ENCODE measurements at regions of chr2 and their contacts with region 1.

Region 1: DNA sequence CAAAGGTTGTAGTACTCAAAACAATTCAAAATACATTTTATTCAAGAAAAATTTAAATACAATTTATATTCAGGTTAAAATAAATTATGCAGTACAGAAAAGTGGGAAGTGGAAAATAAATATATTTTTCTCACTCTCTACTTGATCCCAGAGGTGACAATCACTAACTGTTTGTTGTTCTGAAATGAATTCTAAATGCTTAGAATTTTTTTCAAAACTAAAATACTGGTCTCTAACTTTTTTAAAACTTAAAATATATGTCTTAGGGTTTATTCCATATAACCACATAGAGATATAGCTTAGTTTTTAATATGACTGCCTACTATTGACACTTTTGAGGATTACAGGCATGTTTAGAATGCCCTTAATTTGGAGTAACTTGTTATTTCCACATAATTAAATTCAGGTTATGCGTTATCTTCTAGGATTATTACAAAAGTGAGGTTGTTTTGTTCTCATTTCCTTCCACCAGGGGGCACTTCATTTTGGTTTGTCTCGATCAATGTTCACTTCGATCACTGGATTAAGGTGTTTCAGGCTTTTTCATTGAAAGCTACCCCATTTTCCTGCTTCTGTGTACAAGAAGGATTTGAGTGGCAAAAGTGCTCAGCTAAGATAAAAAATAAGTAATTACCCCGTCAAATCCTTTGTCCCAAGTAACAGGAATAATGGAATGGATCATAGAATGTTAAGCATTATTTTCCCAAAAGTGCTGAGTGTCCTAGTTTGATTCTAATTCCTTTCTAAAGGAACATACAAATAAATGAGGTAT is 27.1 kb upstream of the TFPI start:
- DNase-seq: no peak
- ATAC-seq: peak; percentile 74
- H3K4me3 ChIP-seq: no peak overlapping the region
- H3K27ac ChIP-seq: no peak overlapping the region
- H3K4me1 ChIP-seq: no peaks in the 10 kb centered on the region
- H3K27me3 ChIP-seq: no peaks in the 10 kb centered on the region
- CTCF ChIP-seq: peak; percentile 54 to 68 (median 61); a peak in 5 of 6 replicates
- EP300 ChIP-seq: no peak
- POLR2A ChIP-seq: no peak
- RAD21 ChIP-seq: peak; percentile 45

Region 2: GRCh38 chr2:187299122-187299906 is 282.0 kb before region 1 on chr2:
- CTCF ChIA-PET with region 1: interaction called, 3 read pairs
- POLR2A ChIA-PET with region 1: no interaction called
- RAD21 ChIA-PET with region 1: no interaction called
- SMC1A ChIA-PET with region 1: no interaction called
- in situ Hi-C with region 1: no loop called
- intact Hi-C with region 1: loop called (anchors 10 kb)
- DNase-seq: no peak
- ATAC-seq: peak; percentile 79
- H3K4me3 ChIP-seq: no peak overlapping the region
- H3K27ac ChIP-seq: no peak overlapping the region
- H3K4me1 ChIP-seq: no peaks in the 10 kb centered on the region
- H3K27me3 ChIP-seq: no peaks in the 10 kb centered on the region
- CTCF ChIP-seq: peak; percentile 32 to 49 (median 38); a peak in 4 of 6 replicates
- EP300 ChIP-seq: no peak
- POLR2A ChIP-seq: no peak
- RAD21 ChIP-seq: peak; percentile 69

Region 3: DNA sequence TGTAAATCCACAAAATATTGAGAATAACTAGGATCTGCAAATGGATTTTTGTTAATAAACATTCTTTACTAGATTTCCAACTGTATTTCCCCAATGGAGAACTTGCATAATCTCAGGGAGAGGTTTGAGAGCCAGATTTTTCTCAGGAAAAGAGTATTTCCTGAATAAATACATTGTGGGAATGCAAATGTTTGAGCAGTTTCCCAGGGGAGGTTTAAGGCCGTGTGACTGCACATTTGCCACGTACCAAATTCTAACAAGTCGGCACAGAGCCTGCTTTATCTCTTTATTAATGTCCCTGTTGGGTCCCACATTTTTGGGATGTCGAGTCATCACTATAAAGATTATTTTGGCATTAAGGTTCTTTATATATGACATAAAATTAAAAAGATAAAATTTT is 54.0 kb before region 1 on chr2:
- CTCF ChIA-PET with region 1: interaction called, 13 read pairs
- POLR2A ChIA-PET with region 1: no interaction called
- RAD21 ChIA-PET with region 1: interaction called, 4 read pairs
- SMC1A ChIA-PET with region 1: interaction called, 10 read pairs
- in situ Hi-C with region 1: no loop called
- intact Hi-C with region 1: loop called (anchors 2 kb)
- DNase-seq: no peak
- ATAC-seq: no peak
- H3K4me3 ChIP-seq: no peak overlapping the region
- H3K27ac ChIP-seq: no peak overlapping the region
- H3K4me1 ChIP-seq: no peaks in the 10 kb centered on the region
- H3K27me3 ChIP-seq: no peaks in the 10 kb centered on the region
- CTCF ChIP-seq: no peak
- EP300 ChIP-seq: no peak
- POLR2A ChIP-seq: no peak
- RAD21 ChIP-seq: no peak

Region 4: DNA sequence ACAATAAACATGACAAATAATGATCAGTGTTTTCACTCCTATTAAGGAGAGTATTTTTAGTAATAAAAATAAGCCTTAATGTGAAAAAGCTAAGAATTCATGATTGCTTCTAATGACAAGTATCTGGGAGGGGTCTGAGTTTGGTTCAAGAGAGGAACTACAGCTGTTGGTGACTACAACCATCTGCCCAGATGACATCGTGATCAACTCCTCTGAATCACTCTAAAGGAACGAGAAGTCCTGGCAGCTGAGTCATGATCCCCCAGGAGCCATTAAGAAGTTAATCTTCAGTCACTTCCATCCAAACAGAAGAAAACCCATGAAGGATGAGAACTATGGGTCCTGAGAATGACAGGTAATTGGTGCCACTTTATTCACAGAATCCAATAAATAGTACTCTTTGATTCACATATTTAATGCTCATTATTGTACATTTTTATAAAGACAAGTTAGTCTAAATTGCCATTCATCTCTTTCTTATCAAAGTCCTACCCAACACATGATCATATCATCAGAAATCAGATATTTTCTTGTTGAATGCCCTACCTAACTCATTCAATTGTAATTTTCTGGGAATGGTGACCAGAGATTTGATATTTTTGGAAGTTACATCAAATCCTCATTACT is 33.8 kb before region 1 on chr2:
- CTCF ChIA-PET with region 1: interaction called, 36 read pairs
- POLR2A ChIA-PET with region 1: no interaction called
- RAD21 ChIA-PET with region 1: interaction called, 7 read pairs
- SMC1A ChIA-PET with region 1: interaction called, 16 read pairs
- in situ Hi-C with region 1: no loop called
- intact Hi-C with region 1: no loop called
- DNase-seq: no peak
- ATAC-seq: peak; percentile 27; the same call in 1 of the 3 replicates
- H3K4me3 ChIP-seq: no peak overlapping the region
- H3K27ac ChIP-seq: no peak overlapping the region
- H3K4me1 ChIP-seq: no peaks in the 10 kb centered on the region
- H3K27me3 ChIP-seq: no peaks in the 10 kb centered on the region
- CTCF ChIP-seq: no peak
- EP300 ChIP-seq: no peak
- POLR2A ChIP-seq: no peak
- RAD21 ChIP-seq: no peak

Region 5: DNA sequence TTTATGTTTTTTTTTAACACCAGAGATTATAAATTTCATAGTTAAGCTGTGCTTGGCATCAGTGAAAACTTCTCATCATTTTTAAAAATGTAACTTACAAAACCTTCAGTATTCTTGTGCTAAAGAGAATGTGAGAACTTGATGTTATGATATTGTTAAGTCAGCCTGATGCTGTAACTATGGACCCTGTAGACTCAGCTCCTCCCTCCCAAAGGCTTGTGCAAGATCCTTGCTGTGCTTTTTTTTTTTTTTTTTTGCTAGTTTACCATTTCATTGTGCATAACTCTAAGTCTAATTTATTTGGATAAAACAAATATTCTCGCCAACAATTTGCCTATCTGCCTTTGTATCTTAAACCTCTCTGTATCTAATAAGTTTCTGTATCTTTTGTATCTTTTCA is 14.2 kb before region 1 on chr2:
- CTCF ChIA-PET with region 1: interaction called, 24 read pairs
- POLR2A ChIA-PET with region 1: no interaction called
- RAD21 ChIA-PET with region 1: interaction called, 6 read pairs
- SMC1A ChIA-PET with region 1: interaction called, 4 read pairs
- in situ Hi-C with region 1: no loop called
- intact Hi-C with region 1: no loop called
- DNase-seq: no peak
- ATAC-seq: no peak
- H3K4me3 ChIP-seq: no peak overlapping the region
- H3K27ac ChIP-seq: no peak overlapping the region
- H3K4me1 ChIP-seq: no peaks in the 10 kb centered on the region
- H3K27me3 ChIP-seq: no peaks in the 10 kb centered on the region
- CTCF ChIP-seq: no peak
- EP300 ChIP-seq: no peak
- POLR2A ChIP-seq: no peak
- RAD21 ChIP-seq: no peak

Region 6: GRCh38 chr2:187842978-187843847 is 261.9 kb after region 1 on chr2:
- CTCF ChIA-PET with region 1: interaction called, 131 read pairs
- POLR2A ChIA-PET with region 1: no interaction called
- RAD21 ChIA-PET with region 1: interaction called, 37 read pairs
- SMC1A ChIA-PET with region 1: interaction called, 81 read pairs
- in situ Hi-C with region 1: loop called (anchors 5 kb)
- intact Hi-C with region 1: loop called (anchors 1 kb)
- DNase-seq: no peak
- ATAC-seq: peak; percentile 79
- H3K4me3 ChIP-seq: no peak overlapping the region
- H3K27ac ChIP-seq: no peak overlapping the region
- H3K4me1 ChIP-seq: no peaks in the 10 kb centered on the region
- H3K27me3 ChIP-seq: no peaks in the 10 kb centered on the region
- CTCF ChIP-seq: peak; percentile 48 to 64 (median 51); a peak in 5 of 6 replicates
- EP300 ChIP-seq: no peak
- POLR2A ChIP-seq: no peak
- RAD21 ChIP-seq: peak; percentile 64